B cell (primary cell): ENCODE measurements at regions of chr19 and their contacts with region 1.

Region 1: GRCh38 chr19:58362272-58362994 is at the start of gene ZNF497:
- DNase-seq: peak; percentile 99
- ATAC-seq: peak; percentile 83
- H3K4me3 ChIP-seq: peak within 1 kb of the TSS; percentile 69 to 90 (median 74)
- H3K4me3 Mint-ChIP-seq: peak within 1 kb of the TSS; percentile 95
- H3K27ac ChIP-seq: peak within 1 kb of the TSS; percentile 80 to 81
- H3K27ac Mint-ChIP-seq: peak within 1 kb of the TSS; percentile 97
- H3K4me1 ChIP-seq: peaks cover 11 to 30% of the 10 kb centered on the region in 2 donors
- H3K4me1 Mint-ChIP-seq: peaks cover 17% of the 10 kb centered on the region
- H3K27me3 ChIP-seq: peaks cover 0 to 13% (median 5%) of the 10 kb centered on the region in 4 experiments
- H3K27me3 Mint-ChIP-seq: peaks cover 3% of the 10 kb centered on the region
- CTCF ChIP-seq: no peak
- total RNA-seq, gene ZNF497: 2.7 and 4.4 TPM in 2 replicates

Region 2: DNA sequence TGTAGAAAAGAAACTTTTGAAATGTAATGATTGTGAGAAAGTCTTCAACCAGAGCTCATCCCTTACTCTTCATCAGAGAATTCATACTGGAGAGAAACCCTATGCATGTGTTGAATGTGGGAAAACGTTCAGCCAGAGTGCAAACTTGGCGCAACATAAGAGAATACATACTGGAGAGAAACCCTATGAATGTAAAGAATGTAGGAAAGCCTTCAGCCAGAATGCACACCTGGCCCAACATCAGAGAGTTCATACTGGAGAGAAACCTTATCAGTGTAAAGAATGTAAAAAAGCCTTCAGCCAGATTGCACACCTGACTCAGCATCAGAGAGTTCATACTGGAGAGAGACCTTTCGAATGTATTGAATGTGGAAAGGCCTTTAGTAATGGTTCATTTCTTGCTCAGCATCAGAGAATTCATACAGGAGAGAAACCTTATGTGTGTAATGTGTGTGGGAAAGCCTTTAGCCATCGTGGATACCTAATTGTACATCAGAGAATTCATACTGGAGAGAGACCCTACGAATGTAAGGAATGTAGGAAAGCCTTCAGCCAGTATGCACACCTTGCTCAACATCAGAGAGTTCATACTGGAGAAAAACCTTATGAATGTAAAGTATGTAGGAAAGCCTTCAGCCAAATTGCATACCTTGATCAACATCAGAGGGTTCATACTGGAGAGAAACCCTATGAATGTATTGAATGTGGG is 1939.0 kb before region 1 on chr19:
- CTCF ChIA-PET with region 1: no interaction called
- POLR2A ChIA-PET with region 1: no interaction called
- intact Hi-C with region 1: no loop called
- DNase-seq: no peak
- ATAC-seq: no peak
- H3K4me3 ChIP-seq: no peak overlapping the region
- H3K4me3 Mint-ChIP-seq: no peak overlapping the region
- H3K27ac ChIP-seq: no peak overlapping the region
- H3K27ac Mint-ChIP-seq: no peak overlapping the region
- H3K4me1 ChIP-seq: no peaks in the 10 kb centered on the region
- H3K4me1 Mint-ChIP-seq: no peaks in the 10 kb centered on the region
- H3K27me3 ChIP-seq: no peaks in the 10 kb centered on the region
- H3K27me3 Mint-ChIP-seq: no peaks in the 10 kb centered on the region
- CTCF ChIP-seq: no peak

Region 3: DNA sequence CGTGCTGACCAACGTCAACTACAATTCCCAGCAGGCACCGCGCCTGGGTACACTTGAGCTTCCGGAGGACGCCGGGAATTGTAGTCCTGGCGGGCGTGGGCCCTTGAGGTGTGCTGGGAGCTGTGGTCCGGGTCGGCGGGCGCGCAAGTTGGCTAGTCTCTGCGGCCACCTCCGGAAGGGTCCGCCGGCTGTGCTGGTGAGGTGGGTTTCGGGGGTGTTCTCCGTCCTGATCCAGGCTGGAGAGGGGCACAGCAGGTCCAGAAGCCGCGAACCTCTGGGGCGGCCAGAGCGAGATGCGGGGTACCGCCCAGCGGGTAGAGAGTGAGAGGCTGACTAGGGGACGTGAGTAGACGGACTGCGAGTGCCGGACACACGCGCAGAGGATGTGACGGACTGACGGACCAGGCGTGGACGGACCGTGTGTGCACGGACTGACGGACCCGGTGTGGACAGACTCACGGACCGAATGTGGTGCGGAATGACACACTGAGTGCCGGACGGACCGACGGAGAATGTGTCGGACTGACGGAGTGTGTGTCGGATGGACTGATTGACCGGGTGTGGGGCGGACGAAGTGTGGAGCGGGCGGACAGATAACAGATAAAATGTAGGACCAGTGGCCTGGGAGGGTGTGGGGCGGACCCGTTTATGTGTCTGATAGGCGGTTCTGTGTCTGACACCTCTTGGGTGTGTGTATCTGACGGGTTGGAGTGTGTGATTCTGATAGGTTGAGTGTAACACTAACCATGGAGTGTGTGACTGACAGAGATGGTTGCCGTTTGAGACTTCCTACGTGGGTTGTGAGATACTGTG is 35.3 kb before region 1 on chr19 and contains the start of gene ZSCAN22:
- CTCF ChIA-PET with region 1: interaction called, 3 read pairs
- POLR2A ChIA-PET with region 1: interaction called, 17 read pairs
- intact Hi-C with region 1: loop called (anchors 1 kb)
- DNase-seq: peak; percentile 90
- ATAC-seq: peak; percentile 92
- H3K4me3 ChIP-seq: peak within 1 kb of the TSS; percentile 72 to 98 (median 83)
- H3K4me3 Mint-ChIP-seq: no peak within 1 kb of the TSS
- H3K27ac ChIP-seq: peak within 1 kb of the TSS; percentile 71 to 82
- H3K27ac Mint-ChIP-seq: no peak within 1 kb of the TSS
- H3K4me1 ChIP-seq: peaks cover 11 to 23% of the 10 kb centered on the region in 2 donors
- H3K4me1 Mint-ChIP-seq: no peaks in the 10 kb centered on the region
- H3K27me3 ChIP-seq: no peaks in the 10 kb centered on the region
- H3K27me3 Mint-ChIP-seq: no peaks in the 10 kb centered on the region
- CTCF ChIP-seq: no peak
- total RNA-seq, gene ZSCAN22: 7.1 TPM in 2 replicates

Region 4: DNA sequence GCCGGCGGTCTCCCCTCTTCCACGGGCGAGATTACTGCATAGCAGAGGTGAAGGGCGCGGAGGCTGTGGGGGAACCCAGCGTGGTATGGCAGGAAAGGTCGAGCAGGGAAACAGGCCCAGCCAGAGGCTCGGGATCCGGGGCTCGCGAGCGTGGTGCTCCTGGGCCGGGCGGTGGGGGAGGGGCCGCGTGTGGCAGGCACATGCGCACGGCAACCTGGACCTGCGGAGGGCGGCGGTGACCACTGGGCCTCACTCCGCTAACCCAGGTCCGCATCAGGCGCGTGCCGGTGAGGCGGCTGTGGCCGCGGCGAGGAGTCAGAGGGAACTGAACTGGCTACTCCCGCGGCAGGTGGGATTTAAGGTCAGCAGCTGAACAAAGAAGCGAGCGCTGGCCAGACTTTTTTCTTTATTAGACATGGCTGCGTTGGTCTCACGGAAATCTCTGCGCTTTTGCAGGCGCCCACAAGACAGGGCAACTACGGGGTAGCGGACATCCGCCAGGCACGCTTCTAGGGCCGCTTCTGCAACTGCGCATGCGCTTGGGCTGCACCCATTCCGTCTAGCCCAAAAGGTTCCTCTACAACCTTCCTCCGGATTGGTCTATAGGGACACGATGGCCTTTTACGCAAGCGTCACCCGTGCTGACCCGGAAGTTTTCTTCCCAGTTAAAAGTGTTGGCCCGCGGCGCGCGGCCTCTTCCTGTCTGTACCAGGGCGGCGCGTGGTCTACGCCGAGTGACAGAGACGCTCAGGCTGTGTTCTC is 24.3 kb after region 1 on chr19 and contains the start of gene RPS5:
- CTCF ChIA-PET with region 1: no interaction called
- POLR2A ChIA-PET with region 1: interaction called, 35 read pairs
- intact Hi-C with region 1: loop called (anchors 1 kb)
- DNase-seq: peak; percentile 98
- ATAC-seq: peak; percentile 90
- H3K4me3 ChIP-seq: peak within 1 kb of the TSS; percentile 71 to 87 (median 76)
- H3K4me3 Mint-ChIP-seq: peak within 1 kb of the TSS; percentile 97
- H3K27ac ChIP-seq: peak within 1 kb of the TSS; percentile 94 to 95
- H3K27ac Mint-ChIP-seq: peak within 1 kb of the TSS; percentile 99
- H3K4me1 ChIP-seq: peaks cover 27 to 33% of the 10 kb centered on the region in 2 donors
- H3K4me1 Mint-ChIP-seq: peaks cover 44% of the 10 kb centered on the region
- H3K27me3 ChIP-seq: no peaks in the 10 kb centered on the region
- H3K27me3 Mint-ChIP-seq: no peaks in the 10 kb centered on the region
- CTCF ChIP-seq: no peak
- total RNA-seq, gene RPS5: 1,234 and 1,311 TPM in 2 replicates

Region 5: GRCh38 chr19:58439576-58440554 is 77.4 kb after region 1 on chr19 and contains the start of gene ZNF132:
- CTCF ChIA-PET with region 1: no interaction called
- POLR2A ChIA-PET with region 1: interaction called, 11 read pairs
- intact Hi-C with region 1: no loop called
- DNase-seq: peak; percentile 99
- ATAC-seq: peak; percentile 98
- H3K4me3 ChIP-seq: peak within 1 kb of the TSS; percentile 60 to 97 (median 74)
- H3K4me3 Mint-ChIP-seq: peak within 1 kb of the TSS; percentile 99
- H3K27ac ChIP-seq: peak within 1 kb of the TSS; percentile 78 to 97
- H3K27ac Mint-ChIP-seq: peak within 1 kb of the TSS; percentile 98
- H3K4me1 ChIP-seq: peaks cover 14 to 21% of the 10 kb centered on the region in 2 donors
- H3K4me1 Mint-ChIP-seq: peaks cover 23% of the 10 kb centered on the region
- H3K27me3 ChIP-seq: no peaks in the 10 kb centered on the region
- H3K27me3 Mint-ChIP-seq: peaks cover 9% of the 10 kb centered on the region
- CTCF ChIP-seq: no peak
- total RNA-seq, gene ZNF132: 14.7 and 15.2 TPM in 2 replicates

Region 6: DNA sequence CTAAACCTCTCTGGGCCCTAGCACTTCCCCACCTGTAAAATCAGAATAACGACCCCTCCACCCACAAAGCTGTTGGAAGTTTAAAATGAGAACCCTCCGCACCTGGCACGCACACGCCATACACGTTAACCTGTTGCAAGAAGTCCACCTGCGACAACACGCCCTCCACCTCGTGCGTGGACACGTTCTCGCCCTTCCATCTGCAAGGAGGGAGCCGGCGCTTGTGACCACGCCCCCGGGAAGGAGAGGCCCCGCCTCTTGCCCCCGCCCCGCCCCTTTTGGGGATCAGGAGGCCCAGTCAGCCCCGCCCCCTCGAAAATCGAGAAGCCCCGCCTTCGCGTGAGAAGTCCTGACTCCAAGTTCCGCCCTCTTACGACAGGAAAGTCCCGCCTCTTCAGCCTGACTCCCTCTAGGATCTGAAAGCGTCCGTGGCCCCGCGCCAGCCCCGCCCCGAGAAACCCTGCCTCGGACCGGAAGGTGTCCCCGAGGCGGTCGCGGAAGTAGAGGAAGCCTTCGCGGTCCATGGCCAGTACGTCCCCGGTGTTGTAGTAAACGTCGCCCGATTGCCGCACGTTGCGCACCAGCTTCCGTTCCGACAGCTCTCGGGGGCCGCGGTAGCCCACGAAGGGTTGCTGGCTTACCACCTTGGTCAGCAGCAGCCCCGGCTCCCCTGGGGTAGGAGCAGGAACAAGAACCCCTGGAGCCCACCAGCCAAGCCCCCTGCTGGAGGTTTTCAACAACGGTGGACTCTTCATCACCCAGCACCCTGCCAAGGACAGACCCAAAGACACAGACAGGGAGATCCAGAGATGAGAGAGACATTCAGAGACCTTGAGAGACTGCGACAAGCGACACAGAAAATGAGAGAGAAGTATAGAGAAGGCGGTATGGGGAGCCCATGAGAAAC is 136.8 kb after region 1 on chr19:
- CTCF ChIA-PET with region 1: no interaction called
- POLR2A ChIA-PET with region 1: interaction called, 5 read pairs
- intact Hi-C with region 1: loop called (anchors 1 kb)
- DNase-seq: peak; percentile 96
- ATAC-seq: peak; percentile 89
- H3K4me3 ChIP-seq: peak overlapping the region; percentile 55 to 81 (median 69)
- H3K4me3 Mint-ChIP-seq: peak overlapping the region; percentile 91
- H3K27ac ChIP-seq: peak overlapping the region; percentile 74 to 85
- H3K27ac Mint-ChIP-seq: peak overlapping the region; percentile 93
- H3K4me1 ChIP-seq: peaks cover 9 to 20% of the 10 kb centered on the region in 2 donors
- H3K4me1 Mint-ChIP-seq: peaks cover 19% of the 10 kb centered on the region
- H3K27me3 ChIP-seq: no peaks in the 10 kb centered on the region
- H3K27me3 Mint-ChIP-seq: no peaks in the 10 kb centered on the region
- CTCF ChIP-seq: peak; percentile 45

Region 7: DNA sequence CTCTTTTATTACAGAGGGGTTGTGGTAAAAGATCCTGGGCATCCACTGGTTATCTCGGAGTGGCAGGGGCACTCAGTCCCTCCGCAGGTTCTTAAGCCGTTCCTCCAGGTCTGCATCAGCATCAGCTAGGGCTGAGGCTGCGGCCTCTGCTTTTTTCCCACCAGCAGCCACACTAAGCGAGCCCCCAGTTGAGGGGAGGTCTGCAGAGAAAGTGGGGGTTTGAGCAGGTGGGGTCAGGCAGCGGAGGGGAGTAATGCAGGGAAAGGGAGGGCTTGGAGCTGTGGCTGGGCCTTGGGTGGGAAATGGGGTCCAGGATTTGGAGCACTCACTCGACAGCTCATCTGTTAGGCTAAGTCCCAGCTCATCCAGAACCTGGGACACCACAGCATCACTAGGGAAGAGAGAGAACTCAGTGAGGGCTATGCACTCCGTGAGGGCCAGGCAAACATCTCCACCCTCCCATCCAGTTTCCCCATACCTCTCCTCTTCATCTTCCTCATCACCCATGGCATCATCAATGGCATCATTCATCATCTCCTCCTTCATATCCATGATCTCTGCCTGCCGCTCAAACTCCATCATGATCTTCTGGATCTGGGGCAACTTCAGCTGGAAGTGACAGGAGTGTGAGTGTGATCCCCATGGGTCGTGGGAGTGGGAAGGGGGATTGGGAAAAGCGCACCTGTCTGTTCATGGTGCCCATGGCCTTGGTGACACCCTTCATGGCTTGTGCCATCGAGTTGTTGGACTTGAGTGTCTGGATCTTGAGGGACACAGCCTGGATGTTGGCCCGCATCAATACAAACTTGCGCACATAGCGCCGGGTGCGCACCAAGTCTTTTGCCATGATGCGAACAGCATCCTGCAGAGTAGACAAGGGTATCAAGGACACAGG is 189.4 kb after region 1 on chr19:
- CTCF ChIA-PET with region 1: no interaction called
- POLR2A ChIA-PET with region 1: no interaction called
- intact Hi-C with region 1: no loop called
- DNase-seq: peak; percentile 27
- ATAC-seq: no peak
- H3K4me3 ChIP-seq: no peak overlapping the region
- H3K4me3 Mint-ChIP-seq: no peak overlapping the region
- H3K27ac ChIP-seq: no peak overlapping the region
- H3K27ac Mint-ChIP-seq: peak overlapping the region; percentile 47
- H3K4me1 ChIP-seq: peaks cover 17 to 32% of the 10 kb centered on the region in 2 donors
- H3K4me1 Mint-ChIP-seq: peaks cover 39% of the 10 kb centered on the region
- H3K27me3 ChIP-seq: no peaks in the 10 kb centered on the region
- H3K27me3 Mint-ChIP-seq: no peaks in the 10 kb centered on the region
- CTCF ChIP-seq: no peak